CD8-positive, alpha-beta memory T cell (primary cell): ENCODE measurements at regions of chr10 and their contacts with region 1.

Region 1: GRCh38 chr10:28302638-28303488 is at the start of gene MPP7:
- DNase-seq: peak; percentile 94 to 98 (median 97)
- H3K4me3 ChIP-seq: peak within 1 kb of the TSS; percentile 89
- H3K4me3 Mint-ChIP-seq: peak within 1 kb of the TSS; percentile 92 to 97 (median 95)
- H3K27ac ChIP-seq: peak within 1 kb of the TSS; percentile 60
- H3K27ac Mint-ChIP-seq: peak within 1 kb of the TSS; percentile 55 to 95 (median 90)
- H3K4me1 ChIP-seq: peaks cover 40% of the 10 kb centered on the region
- H3K4me1 Mint-ChIP-seq: peaks cover 48 to 82% (median 59%) of the 10 kb centered on the region in 3 donors
- H3K27me3 ChIP-seq: no peaks in the 10 kb centered on the region
- H3K27me3 Mint-ChIP-seq: peaks cover 0 to 2% of the 10 kb centered on the region in 2 donors
- total RNA-seq, gene MPP7: 6.6 to 7.9 TPM

Region 2: GRCh38 chr10:28326516-28327490 is 23.9 kb after region 1 on chr10:
- CTCF ChIA-PET with region 1: interaction called, 145 read pairs
- POLR2A ChIA-PET with region 1: interaction called, 99 read pairs
- DNase-seq: no peak
- H3K4me3 ChIP-seq: no peak overlapping the region
- H3K4me3 Mint-ChIP-seq: peak overlapping the region in 5 of 7 donors; percentile 4 to 52 (median 16)
- H3K27ac ChIP-seq: no peak overlapping the region
- H3K27ac Mint-ChIP-seq: peak overlapping the region in 5 of 8 donors; percentile 27 to 60 (median 49)
- H3K4me1 ChIP-seq: peaks cover 49% of the 10 kb centered on the region
- H3K4me1 Mint-ChIP-seq: peaks cover 56 to 81% (median 80%) of the 10 kb centered on the region in 3 donors
- H3K27me3 ChIP-seq: no peaks in the 10 kb centered on the region
- H3K27me3 Mint-ChIP-seq: no peaks in the 10 kb centered on the region

Region 3: GRCh38 chr10:28334296-28334695 is 31.4 kb after region 1 on chr10:
- CTCF ChIA-PET with region 1: interaction called, 145 read pairs
- POLR2A ChIA-PET with region 1: interaction called, 99 read pairs
- DNase-seq: peak in 4 of 5 donors; percentile 50 to 92 (median 84)
- H3K4me3 ChIP-seq: peak overlapping the region; percentile 63
- H3K4me3 Mint-ChIP-seq: peak overlapping the region; percentile 91 to 98 (median 97)
- H3K27ac ChIP-seq: peak overlapping the region; percentile 99
- H3K27ac Mint-ChIP-seq: peak overlapping the region; percentile 100
- H3K4me1 ChIP-seq: peaks cover 58% of the 10 kb centered on the region
- H3K4me1 Mint-ChIP-seq: peaks cover 53 to 74% (median 63%) of the 10 kb centered on the region in 3 donors
- H3K27me3 ChIP-seq: no peaks in the 10 kb centered on the region
- H3K27me3 Mint-ChIP-seq: peaks cover 0 to 2% of the 10 kb centered on the region in 2 donors

Region 4: DNA sequence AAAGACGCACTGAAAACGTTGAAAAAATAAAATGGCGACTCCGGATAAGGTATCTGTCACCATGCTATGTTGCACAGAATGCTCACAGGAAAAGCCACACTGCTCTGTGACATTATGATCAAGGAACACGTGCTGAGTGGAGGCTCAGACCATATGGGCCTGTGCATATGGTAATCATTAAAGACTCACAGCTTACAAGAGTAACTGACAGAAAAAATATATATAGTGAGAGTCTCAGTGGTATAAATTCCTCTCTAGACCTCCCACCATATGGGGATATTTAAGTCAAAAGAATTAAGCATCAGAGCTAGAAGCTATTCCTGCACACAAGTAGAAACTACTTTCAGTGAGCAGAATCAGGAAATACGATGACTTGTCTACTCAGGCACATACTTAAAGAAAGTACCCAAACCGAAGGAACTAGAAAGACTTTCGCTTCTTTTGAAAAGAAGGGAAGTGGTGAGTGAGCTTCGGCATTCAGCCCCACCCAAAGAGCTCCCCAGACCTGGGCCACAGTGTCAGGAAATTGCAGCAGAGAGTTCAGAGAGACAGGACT is 65.1 kb after region 1 on chr10:
- CTCF ChIA-PET with region 1: interaction called, 18 read pairs
- POLR2A ChIA-PET with region 1: interaction called, 16 read pairs
- DNase-seq: peak; percentile 6 to 84 (median 77)
- H3K4me3 ChIP-seq: peak overlapping the region; percentile 19
- H3K4me3 Mint-ChIP-seq: peak overlapping the region; percentile 23 to 85 (median 74)
- H3K27ac ChIP-seq: peak overlapping the region; percentile 44
- H3K27ac Mint-ChIP-seq: peak overlapping the region; percentile 86 to 98 (median 94)
- H3K4me1 ChIP-seq: peaks cover 51% of the 10 kb centered on the region
- H3K4me1 Mint-ChIP-seq: peaks cover 36 to 53% (median 51%) of the 10 kb centered on the region in 3 donors
- H3K27me3 ChIP-seq: no peaks in the 10 kb centered on the region
- H3K27me3 Mint-ChIP-seq: no peaks in the 10 kb centered on the region

Region 5: DNA sequence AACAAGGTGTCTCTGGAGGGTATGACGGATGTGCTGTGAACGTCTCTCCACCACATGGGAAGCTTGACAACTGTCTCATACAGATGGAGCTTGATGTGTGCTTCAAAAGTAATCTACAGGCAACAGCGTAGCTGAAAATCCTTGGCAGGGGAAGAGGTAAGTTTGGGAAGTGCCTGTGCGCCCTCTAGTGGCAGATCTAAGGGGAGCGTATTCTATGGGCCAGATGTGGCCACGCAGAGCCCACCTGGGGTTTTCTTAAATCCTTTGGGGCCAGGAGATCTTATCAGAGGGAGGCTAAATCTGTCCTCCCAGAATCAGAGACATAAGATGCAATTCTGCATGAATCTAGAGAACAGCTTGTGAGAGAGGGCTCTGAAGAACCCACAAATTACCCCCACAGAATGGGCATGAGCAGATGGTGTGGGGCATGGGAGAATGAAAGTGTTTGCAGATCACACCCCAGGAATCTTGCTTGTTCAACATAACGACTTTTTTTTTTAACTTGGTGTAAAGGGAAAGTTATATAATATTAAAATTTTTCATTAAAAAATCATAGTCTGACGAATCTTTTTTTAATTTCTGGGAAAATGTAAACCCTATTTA is 91.2 kb after region 1 on chr10:
- CTCF ChIA-PET with region 1: interaction called, 21 read pairs
- POLR2A ChIA-PET with region 1: interaction called, 3 read pairs
- DNase-seq: peak; percentile 42 to 69 (median 48)
- H3K4me3 ChIP-seq: no peak overlapping the region
- H3K4me3 Mint-ChIP-seq: peak overlapping the region in 1 of 7 donors; percentile 11
- H3K27ac ChIP-seq: no peak overlapping the region
- H3K27ac Mint-ChIP-seq: no peak overlapping the region
- H3K4me1 ChIP-seq: no peaks in the 10 kb centered on the region
- H3K4me1 Mint-ChIP-seq: peaks cover 4 to 6% (median 5%) of the 10 kb centered on the region in 3 donors
- H3K27me3 ChIP-seq: no peaks in the 10 kb centered on the region
- H3K27me3 Mint-ChIP-seq: peaks cover 6 to 7% of the 10 kb centered on the region in 2 donors

Region 6: DNA sequence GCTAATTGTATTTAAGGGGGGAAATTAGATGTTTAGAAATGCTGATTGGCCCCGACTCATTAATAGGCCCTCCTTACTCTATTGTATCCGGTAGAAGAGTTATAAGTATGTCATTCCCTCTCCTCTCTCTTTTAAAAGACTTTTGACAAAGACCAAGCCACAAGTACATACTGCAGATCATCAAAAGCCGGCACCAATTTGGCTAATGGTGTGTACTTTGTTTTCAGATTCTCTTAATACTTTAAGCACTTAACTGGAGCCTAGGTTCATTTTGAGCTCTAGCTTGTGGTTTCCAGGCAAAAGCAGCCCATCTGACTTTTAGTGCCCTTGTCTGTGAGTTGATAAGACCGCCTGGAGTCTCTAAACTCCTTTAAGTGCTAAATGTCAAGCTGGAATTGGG is 776.1 kb after region 1 on chr10:
- CTCF ChIA-PET with region 1: no interaction called
- POLR2A ChIA-PET with region 1: no interaction called
- DNase-seq: no peak
- H3K4me3 ChIP-seq: no peak overlapping the region
- H3K4me3 Mint-ChIP-seq: no peak overlapping the region
- H3K27ac ChIP-seq: no peak overlapping the region
- H3K27ac Mint-ChIP-seq: no peak overlapping the region
- H3K4me1 ChIP-seq: no peaks in the 10 kb centered on the region
- H3K4me1 Mint-ChIP-seq: no peaks in the 10 kb centered on the region
- H3K27me3 ChIP-seq: no peaks in the 10 kb centered on the region
- H3K27me3 Mint-ChIP-seq: peaks cover 0 to 2% of the 10 kb centered on the region in 2 donors